ENCODE measurements at regions of chr1 and their contacts with region 1.

Region 1: GRCh38 chr1:247390116-247390791 is 25.7 kb upstream of the NLRP3 start:
- DNase-seq: peak; percentile 66
- H3K4me3 ChIP-seq: peak overlapping the region; percentile 44
- H3K27ac ChIP-seq: peak overlapping the region; percentile 80
- H3K27me3 ChIP-seq: no peaks in the 10 kb centered on the region
- CTCF ChIP-seq: peak; percentile 98

Region 2: DNA sequence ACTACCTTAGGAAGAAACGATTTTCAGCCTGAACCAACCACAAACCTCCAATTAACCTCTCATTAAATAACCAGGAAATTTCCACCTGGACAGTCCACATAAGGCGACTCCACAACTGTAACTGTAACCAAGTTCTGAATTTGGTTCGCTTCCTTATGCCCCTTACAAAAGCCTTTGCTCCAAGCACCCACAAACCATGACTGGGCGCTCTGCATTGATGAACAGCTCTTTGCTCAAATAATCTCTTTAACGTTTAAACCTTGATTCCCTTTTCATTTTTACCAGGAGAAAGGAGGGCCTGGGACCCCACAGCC is 180.2 kb before region 1 on chr1:
- CTCF ChIA-PET with region 1: no interaction called
- POLR2A ChIA-PET with region 1: no interaction called
- DNase-seq: no peak
- H3K4me3 ChIP-seq: peak overlapping the region; percentile 94
- H3K27ac ChIP-seq: no peak overlapping the region
- H3K27me3 ChIP-seq: peaks cover 4% of the 10 kb centered on the region
- CTCF ChIP-seq: no peak

Region 3: GRCh38 chr1:247331172-247331991 is 58.9 kb before region 1 on chr1 and contains the start of gene ZNF496:
- CTCF ChIA-PET with region 1: interaction called, 16 read pairs
- POLR2A ChIA-PET with region 1: interaction called, 5 read pairs
- DNase-seq: peak; percentile 71
- H3K4me3 ChIP-seq: peak within 1 kb of the TSS; percentile 81
- H3K27ac ChIP-seq: peak within 1 kb of the TSS; percentile 80
- H3K27me3 ChIP-seq: no peaks in the 10 kb centered on the region
- CTCF ChIP-seq: no peak
- polyA plus RNA-seq, gene ZNF496: 18.5 and 20.0 TPM in 2 replicates

Region 4: GRCh38 chr1:247373721-247374141 is 16.5 kb before region 1 on chr1:
- CTCF ChIA-PET with region 1: interaction called, 117 read pairs
- POLR2A ChIA-PET with region 1: no interaction called
- DNase-seq: no peak
- H3K4me3 ChIP-seq: peak overlapping the region; percentile 29; the same call in 1 of the 2 replicates
- H3K27ac ChIP-seq: no peak overlapping the region
- H3K27me3 ChIP-seq: no peaks in the 10 kb centered on the region
- CTCF ChIP-seq: peak; percentile 60

Region 5: GRCh38 chr1:247401310-247402119 is 11.3 kb after region 1 on chr1:
- CTCF ChIA-PET with region 1: interaction called, 16 read pairs
- POLR2A ChIA-PET with region 1: no interaction called
- DNase-seq: no peak
- H3K4me3 ChIP-seq: no peak overlapping the region
- H3K27ac ChIP-seq: no peak overlapping the region
- H3K27me3 ChIP-seq: no peaks in the 10 kb centered on the region
- CTCF ChIP-seq: no peak

Region 6: GRCh38 chr1:247448107-247448791 is 58.0 kb after region 1 on chr1:
- CTCF ChIA-PET with region 1: interaction called, 13 read pairs
- POLR2A ChIA-PET with region 1: interaction called, 6 read pairs
- DNase-seq: no peak
- H3K4me3 ChIP-seq: peak overlapping the region; percentile 56
- H3K27ac ChIP-seq: no peak overlapping the region
- H3K27me3 ChIP-seq: no peaks in the 10 kb centered on the region
- CTCF ChIP-seq: no peak; the same call in 1 of the 2 replicates

Region 7: GRCh38 chr1:247487057-247487456 is 96.8 kb after region 1 on chr1:
- CTCF ChIA-PET with region 1: interaction called, 21 read pairs
- POLR2A ChIA-PET with region 1: no interaction called
- DNase-seq: peak; percentile 1
- H3K4me3 ChIP-seq: no peak overlapping the region
- H3K27ac ChIP-seq: no peak overlapping the region
- H3K27me3 ChIP-seq: no peaks in the 10 kb centered on the region
- CTCF ChIP-seq: peak; percentile 42

Measured in AG04450 (cell line).